Right lobe of liver (tissue), 6 donors: ENCODE measurements at regions of chr6 and their contacts with region 1.

Region 1: GRCh38 chr6:44655412-44656342 is 268.2 kb downstream of the CDC5L start:
- DNase-seq: peak; percentile 65 to 68 (median 68)
- ATAC-seq: peak; percentile 84 to 94 (median 90)
- H3K4me3 ChIP-seq: no peak overlapping the region
- H3K27ac ChIP-seq: no peak overlapping the region
- H3K4me1 ChIP-seq: peaks cover 0 to under 1% (median 0%) of the 10 kb centered on the region in 4 donors
- H3K27me3 ChIP-seq: no peaks in the 10 kb centered on the region
- CTCF ChIP-seq: peak; percentile 91 to 95 (median 94)
- POLR2A ChIP-seq: no peak

Region 2: GRCh38 chr6:44116641-44117382 is 538.9 kb before region 1 on chr6:
- intact Hi-C with region 1: no loop called
- DNase-seq: peak in 1 of 3 donors; percentile 75
- ATAC-seq: peak; percentile 85 to 91 (median 89)
- H3K4me3 ChIP-seq: no peak overlapping the region
- H3K27ac ChIP-seq: peak overlapping the region in 2 of 3 donors; percentile 13 to 53
- H3K4me1 ChIP-seq: peaks cover 0 to 62% (median 30%) of the 10 kb centered on the region in 4 donors
- H3K27me3 ChIP-seq: no peaks in the 10 kb centered on the region
- CTCF ChIP-seq: no peak
- POLR2A ChIP-seq: no peak

Region 3: GRCh38 chr6:44800171-44800783 is 144.6 kb after region 1 on chr6:
- intact Hi-C with region 1: no loop called
- DNase-seq: no peak
- ATAC-seq: peak in 3 of 4 donors; percentile 35 to 43 (median 41)
- H3K4me3 ChIP-seq: no peak overlapping the region
- H3K27ac ChIP-seq: no peak overlapping the region
- H3K4me1 ChIP-seq: peaks cover 0 to 9% (median 0%) of the 10 kb centered on the region in 4 donors
- H3K27me3 ChIP-seq: no peaks in the 10 kb centered on the region
- CTCF ChIP-seq: no peak
- POLR2A ChIP-seq: no peak

Region 4: DNA sequence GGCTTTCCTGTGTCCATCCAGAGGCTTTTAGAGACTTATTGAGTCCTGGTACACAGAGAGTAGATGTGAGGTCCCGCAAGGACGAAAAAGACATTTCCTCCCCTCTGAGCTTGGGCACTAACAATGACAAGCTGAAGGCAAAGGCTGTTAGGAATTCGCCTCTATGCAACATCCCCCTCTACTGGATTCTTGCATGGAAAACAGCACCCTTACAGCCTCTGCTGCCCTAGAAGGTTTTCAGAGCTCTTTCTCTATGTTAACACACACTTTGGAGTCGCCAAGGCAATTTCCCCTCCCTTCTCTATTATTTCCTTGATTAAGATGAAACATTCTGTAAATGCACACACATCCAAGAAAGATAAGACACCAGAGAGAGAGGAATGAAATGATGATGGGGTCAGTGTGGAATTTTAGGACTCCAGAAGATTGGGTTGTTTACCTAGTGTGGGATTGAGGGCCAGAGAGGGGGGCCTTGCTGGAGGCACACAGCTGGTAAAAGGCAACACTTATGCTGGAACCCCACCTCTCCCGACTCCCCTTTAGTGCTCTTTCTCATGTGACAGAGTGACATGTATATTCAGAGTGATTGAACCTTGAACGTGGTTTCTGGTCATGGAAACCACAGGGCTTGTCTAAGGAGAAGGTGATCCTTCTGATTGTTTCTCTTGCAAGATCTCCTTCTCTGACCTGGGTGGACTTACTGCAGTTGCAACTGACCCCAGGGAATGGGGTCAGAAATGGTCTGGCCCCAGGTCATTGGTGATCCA is 1059.2 kb after region 1 on chr6:
- intact Hi-C with region 1: loop called (anchors 10 kb)
- DNase-seq: peak in 1 of 3 donors; percentile 51
- ATAC-seq: peak; percentile 91 to 95 (median 94)
- H3K4me3 ChIP-seq: no peak overlapping the region
- H3K27ac ChIP-seq: no peak overlapping the region
- H3K4me1 ChIP-seq: no peaks in the 10 kb centered on the region
- H3K27me3 ChIP-seq: no peaks in the 10 kb centered on the region
- CTCF ChIP-seq: peak; percentile 77 to 81 (median 78)
- POLR2A ChIP-seq: no peak

Region 5: DNA sequence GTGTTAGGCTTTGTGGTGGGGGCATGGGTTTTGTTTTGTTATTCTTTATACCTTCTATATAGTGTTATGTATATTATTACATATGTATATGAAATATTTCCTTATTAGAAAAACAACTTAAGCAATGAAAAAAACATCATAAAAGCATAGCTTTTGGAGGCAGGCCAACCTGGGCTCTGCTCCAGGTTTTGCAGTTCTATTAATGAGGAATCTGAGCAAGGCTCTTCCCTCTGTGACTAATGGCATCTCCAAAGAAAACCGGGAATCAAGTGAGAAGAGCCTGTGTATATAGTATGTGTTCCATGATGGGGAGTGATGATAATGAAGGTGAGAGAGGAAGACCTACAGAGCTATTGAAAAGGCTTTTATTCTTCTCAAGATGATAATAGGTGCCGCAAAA is 1068.8 kb after region 1 on chr6:
- intact Hi-C with region 1: loop called (anchors 10 kb)
- DNase-seq: no peak
- ATAC-seq: no peak
- H3K4me3 ChIP-seq: no peak overlapping the region
- H3K27ac ChIP-seq: no peak overlapping the region
- H3K4me1 ChIP-seq: no peaks in the 10 kb centered on the region
- H3K27me3 ChIP-seq: no peaks in the 10 kb centered on the region
- CTCF ChIP-seq: no peak
- POLR2A ChIP-seq: no peak